ENCODE measurements at regions of chr21 and their contacts with region 1.

Region 1: DNA sequence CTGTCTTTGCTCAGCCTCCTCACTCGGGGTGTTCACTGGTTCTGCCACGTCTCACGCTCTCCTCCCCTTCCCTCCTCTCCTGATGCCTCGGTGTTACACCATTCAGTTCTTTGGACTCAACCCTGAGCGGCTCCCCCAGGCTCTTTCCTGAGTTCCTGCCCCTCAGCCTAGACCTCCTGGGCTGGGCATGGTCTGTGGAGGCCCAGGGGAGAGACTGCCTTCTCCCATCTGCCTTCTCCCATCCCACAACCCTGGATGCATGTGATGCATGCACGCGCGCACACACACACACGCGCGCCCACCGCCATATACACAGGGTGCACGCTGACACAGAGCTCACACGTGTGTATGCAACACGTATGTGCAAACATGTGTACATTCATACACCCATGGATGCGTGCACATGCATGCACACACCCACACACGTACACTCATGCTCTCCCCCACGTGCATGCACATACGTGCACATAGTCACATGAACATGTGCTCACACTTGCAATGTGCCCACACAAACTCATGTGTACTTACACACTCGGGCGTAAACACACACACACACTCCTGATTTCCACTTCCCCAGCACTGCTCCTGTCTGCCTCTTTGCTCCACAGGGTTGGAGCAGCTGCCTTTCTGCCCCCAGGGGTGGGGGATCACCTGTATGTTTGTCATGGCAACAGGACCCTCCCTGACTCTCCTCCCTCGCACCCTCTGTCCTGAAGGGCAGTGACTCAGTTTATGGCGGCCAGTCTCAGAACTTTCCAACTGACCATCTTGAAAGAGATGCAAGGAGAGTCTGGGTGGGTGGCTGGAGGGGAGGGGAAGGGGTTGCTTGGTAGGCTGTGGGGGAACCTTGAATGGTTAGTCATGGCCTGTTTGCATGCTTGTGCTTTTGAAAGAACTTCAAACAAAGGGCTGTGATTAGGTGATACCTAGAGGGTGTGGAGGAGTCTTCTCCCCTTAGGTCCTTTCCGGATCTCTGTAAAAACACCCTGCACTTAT is 59.1 kb downstream of the HUNK start:
- DNase-seq: no peak

Region 2: DNA sequence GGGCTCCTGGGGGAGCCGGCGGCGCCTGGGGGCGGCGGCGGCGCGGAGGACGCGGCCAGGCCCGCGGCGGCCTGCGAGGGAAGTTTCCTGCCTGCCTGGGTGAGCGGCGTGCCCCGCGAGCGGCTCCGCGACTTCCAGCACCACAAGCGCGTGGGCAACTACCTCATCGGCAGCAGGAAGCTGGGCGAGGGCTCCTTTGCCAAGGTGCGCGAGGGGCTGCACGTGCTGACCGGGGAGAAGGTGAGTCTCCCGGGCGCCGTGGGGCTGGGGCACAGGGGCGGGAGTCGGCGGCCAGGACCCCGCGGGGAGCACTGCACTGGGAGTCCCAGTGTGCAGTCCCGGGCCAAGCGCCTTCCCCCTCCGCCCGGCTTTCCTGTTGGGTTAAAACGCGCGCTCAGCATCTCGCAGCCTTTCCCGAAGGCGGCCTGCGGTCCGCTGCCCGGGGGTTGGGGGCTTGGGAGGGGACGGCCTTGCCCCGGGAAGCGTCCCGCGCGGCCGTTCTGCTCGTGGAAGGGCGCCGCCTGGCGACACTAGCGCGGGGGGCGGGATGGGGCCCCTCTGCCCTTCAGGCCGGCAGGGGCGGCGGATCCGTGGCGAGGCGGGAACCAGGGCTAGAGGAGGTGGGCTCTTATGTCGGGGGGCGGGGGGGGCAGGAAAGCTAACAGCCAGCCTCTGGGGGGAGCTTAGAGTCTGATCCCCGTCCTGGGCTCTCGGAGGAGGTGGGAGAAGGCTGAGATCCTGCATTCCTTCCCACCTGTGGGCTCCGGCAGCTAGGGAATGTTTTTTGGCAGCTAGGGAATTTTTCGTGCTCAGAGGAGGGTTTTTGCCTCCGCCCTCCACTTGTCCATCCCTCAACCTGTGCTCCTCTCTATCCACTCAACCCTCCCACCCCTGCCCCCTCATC is 58.0 kb before region 1 on chr21:
- intact Hi-C with region 1: no loop called
- DNase-seq: peak; percentile 84

Region 3: DNA sequence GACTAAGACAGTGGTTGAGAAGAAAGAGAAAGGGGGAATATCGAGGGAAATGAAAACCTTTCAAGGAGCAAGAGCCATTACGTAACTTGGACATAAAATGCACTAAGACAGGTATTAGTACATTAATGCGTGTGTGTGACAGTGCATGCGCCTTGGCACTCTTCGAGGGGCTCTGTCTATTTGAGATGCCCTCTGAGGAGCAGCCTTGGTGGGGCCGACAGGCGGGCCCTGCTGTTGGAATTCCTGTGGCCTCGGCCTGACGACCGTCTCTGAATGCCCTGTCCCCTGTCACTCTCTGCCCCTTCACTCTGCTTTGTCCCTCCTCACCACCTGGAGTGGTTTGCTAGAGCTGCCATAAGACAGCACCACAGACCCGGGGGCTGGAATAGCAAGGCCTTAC is 46.8 kb before region 1 on chr21:
- intact Hi-C with region 1: loop called in 1 of 2 experiments (anchors 1 kb)
- DNase-seq: no peak

Region 4: DNA sequence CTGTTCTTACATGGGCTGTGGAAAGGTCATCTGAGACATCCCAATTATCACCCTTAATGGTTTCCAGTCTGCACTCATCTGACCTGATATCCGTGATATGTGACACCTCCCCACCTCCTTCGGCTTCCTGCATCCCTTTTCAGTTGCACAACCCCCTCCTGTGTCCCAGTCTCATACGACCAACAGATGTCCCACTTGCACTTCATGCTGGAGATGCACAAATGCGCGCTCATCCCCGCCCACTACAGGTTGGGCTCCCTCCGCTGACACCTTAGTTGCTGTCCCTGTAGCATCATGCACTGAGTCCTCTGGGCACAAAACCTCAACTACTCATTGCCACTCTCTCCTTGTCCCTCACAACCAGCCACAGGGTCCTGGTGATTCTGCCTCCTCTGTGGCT is 252.5 kb after region 1 on chr21:
- intact Hi-C with region 1: no loop called
- DNase-seq: no peak

Measured in posterior vena cava (tissue), 2 donors.